Calu3 (cell line): ENCODE measurements at regions of chr18 and their contacts with region 1.

Region 1: DNA sequence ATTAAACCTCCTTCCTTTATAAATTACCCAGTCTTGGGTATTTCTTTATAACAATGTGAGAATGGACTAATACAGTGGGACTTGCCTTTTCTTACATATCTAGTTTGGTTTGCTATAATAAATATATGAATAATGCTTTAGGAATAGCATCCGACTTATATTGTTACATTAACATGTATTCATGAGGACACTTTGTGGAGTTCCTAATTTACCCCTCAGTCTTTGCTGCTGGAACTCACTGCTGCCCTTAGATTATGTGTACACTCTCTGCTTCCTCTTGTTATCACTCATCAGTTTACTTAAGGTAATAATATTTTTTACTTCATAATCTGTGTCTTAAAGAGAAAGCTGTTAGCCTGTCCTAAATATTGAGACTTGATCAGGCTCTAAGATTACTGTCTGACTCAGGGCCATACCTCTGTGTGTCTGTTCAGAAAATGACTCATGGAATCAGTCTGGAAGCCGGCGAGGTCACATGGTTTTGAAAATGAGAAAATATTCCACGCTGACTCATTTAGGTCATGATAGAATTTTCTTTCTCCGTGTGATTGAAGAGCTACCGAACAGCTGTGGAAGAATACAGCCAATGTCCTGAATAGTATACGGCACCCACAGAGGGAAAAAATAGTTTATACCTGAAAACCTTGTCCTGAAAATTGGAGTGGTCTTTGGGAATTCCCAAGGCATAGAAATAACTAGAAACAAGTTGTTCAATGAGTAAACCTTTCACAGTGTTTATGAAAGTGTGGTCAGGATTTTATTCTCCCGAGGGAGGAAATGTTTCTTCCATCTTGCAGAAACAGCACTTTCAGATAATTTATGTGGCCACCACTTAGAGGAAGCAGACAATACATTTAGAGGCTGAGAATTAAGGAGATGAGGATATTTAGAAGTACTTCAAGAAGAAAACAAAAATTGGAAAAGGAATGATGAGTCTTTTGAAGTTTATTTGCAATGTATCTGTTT is 156.4 kb downstream of the DSEL start:
- DNase-seq: peak; percentile 59
- H3K4me3 Mint-ChIP-seq: peak overlapping the region; percentile 65
- H3K27ac Mint-ChIP-seq: peak overlapping the region; percentile 99
- H3K4me1 Mint-ChIP-seq: peaks cover 19% of the 10 kb centered on the region
- H3K27me3 Mint-ChIP-seq: no peaks in the 10 kb centered on the region
- CTCF ChIP-seq: no peak

Region 2: DNA sequence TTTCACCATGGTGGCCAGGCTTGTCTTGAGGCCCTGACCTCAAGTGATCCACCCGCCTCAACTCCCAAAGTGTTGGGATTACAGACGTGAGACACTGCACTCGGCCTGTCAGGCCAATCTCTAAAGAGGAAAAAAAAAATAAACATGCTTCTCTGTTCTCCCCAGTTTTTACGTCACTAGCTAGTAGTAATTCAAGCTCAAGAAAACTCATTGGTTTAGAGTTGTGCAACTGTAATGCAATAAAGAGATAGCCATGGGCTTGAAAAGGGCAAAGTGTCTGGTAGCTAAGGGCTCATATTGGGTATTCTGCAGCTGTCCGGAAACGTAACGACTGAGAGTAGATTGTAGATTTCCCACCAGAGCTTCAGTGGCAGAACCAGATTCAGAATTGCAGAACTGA is 268.5 kb after region 1 on chr18:
- CTCF ChIA-PET with region 1: no interaction called
- intact Hi-C with region 1: loop called (anchors 10 kb)
- DNase-seq: no peak
- H3K4me3 Mint-ChIP-seq: no peak overlapping the region
- H3K27ac Mint-ChIP-seq: no peak overlapping the region
- H3K4me1 Mint-ChIP-seq: peaks cover 11% of the 10 kb centered on the region
- H3K27me3 Mint-ChIP-seq: no peaks in the 10 kb centered on the region
- CTCF ChIP-seq: no peak